H1 (cell line): ENCODE measurements at regions of chr4 and their contacts with region 1.

Region 1: GRCh38 chr4:78601013-78601412 is 49.4 kb downstream of the ANXA3 start:
- DNase-seq: no peak
- H3K4me3 ChIP-seq: no peak overlapping the region
- H3K27ac ChIP-seq: no peak overlapping the region
- H3K4me1 ChIP-seq: peaks cover 0 to 2% (median 0%) of the 10 kb centered on the region in 4 experiments; a peak in 1 of 7 replicates
- H3K27me3 ChIP-seq: no peaks in the 10 kb centered on the region
- CTCF ChIP-seq: no peak
- EP300 ChIP-seq: no peak
- POLR2A ChIP-seq: no peak
- RAD21 ChIP-seq: no peak

Region 2: GRCh38 chr4:78612398-78613178 is 11.6 kb after region 1 on chr4:
- CTCF ChIA-PET with region 1: interaction called, 32 read pairs
- POLR2A ChIA-PET with region 1: interaction called, 4 read pairs
- DNase-seq: no peak
- H3K4me3 ChIP-seq: no peak overlapping the region
- H3K27ac ChIP-seq: no peak overlapping the region
- H3K4me1 ChIP-seq: no peaks in the 10 kb centered on the region
- H3K27me3 ChIP-seq: no peaks in the 10 kb centered on the region
- CTCF ChIP-seq: peak in 2 of 3 experiments; percentile 42 to 49; a peak in 2 of 4 replicates
- EP300 ChIP-seq: no peak
- POLR2A ChIP-seq: no peak
- RAD21 ChIP-seq: peak; percentile 76 to 77

Region 3: GRCh38 chr4:78710536-78710935 is 109.5 kb after region 1 on chr4:
- CTCF ChIA-PET with region 1: no interaction called
- POLR2A ChIA-PET with region 1: no interaction called
- DNase-seq: no peak
- H3K4me3 ChIP-seq: no peak overlapping the region
- H3K27ac ChIP-seq: no peak overlapping the region
- H3K4me1 ChIP-seq: peaks cover 0 to 10% (median 4%) of the 10 kb centered on the region in 4 experiments; a peak in 5 of 7 replicates
- H3K27me3 ChIP-seq: no peaks in the 10 kb centered on the region
- CTCF ChIP-seq: no peak
- EP300 ChIP-seq: no peak
- POLR2A ChIP-seq: no peak
- RAD21 ChIP-seq: no peak